CD8-positive, alpha-beta memory T cell (primary cell): ENCODE measurements at regions of chr11 and their contacts with region 1.

Region 1: DNA sequence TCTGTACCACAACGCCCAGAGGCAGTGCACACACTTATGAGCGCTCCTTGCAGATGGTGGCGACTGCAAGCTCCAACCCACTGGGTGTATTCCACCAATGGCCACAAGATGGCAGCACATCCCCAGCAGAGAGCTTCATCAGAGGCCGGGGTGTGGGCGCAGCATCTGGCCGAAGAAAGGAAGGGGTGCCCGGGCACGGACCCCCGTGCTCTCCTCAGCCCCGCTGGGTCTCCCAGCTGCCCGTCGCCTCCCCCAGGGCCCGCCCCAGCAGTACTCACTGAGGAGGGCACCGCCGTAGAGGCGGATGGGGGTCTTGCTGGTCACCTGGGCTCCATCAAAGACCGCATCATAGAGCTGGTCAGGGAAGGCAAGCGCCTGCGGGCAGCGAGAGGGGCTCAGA is 14.2 kb downstream of the TP53I11 start:
- DNase-seq: peak; percentile 67 to 85 (median 70)
- H3K4me3 ChIP-seq: no peak overlapping the region
- H3K4me3 Mint-ChIP-seq: no peak overlapping the region
- H3K27ac ChIP-seq: no peak overlapping the region
- H3K27ac Mint-ChIP-seq: peak overlapping the region in 1 of 8 donors; percentile 43
- H3K4me1 ChIP-seq: no peaks in the 10 kb centered on the region
- H3K4me1 Mint-ChIP-seq: peaks cover 6 to 17% (median 13%) of the 10 kb centered on the region in 3 donors
- H3K27me3 ChIP-seq: no peaks in the 10 kb centered on the region
- H3K27me3 Mint-ChIP-seq: no peaks in the 10 kb centered on the region

Region 2: GRCh38 chr11:44949160-44950030 is 12.9 kb after region 1 on chr11:
- CTCF ChIA-PET with region 1: interaction called, 55 read pairs
- POLR2A ChIA-PET with region 1: no interaction called
- DNase-seq: peak; percentile 12 to 57 (median 24)
- H3K4me3 ChIP-seq: peak overlapping the region; percentile 55
- H3K4me3 Mint-ChIP-seq: peak overlapping the region; percentile 84 to 94 (median 90)
- H3K27ac ChIP-seq: no peak overlapping the region
- H3K27ac Mint-ChIP-seq: peak overlapping the region; percentile 43 to 90 (median 79)
- H3K4me1 ChIP-seq: no peaks in the 10 kb centered on the region
- H3K4me1 Mint-ChIP-seq: peaks cover 13 to 39% (median 27%) of the 10 kb centered on the region in 3 donors
- H3K27me3 ChIP-seq: no peaks in the 10 kb centered on the region
- H3K27me3 Mint-ChIP-seq: peaks cover 0 to 5% of the 10 kb centered on the region in 2 donors

Region 3: DNA sequence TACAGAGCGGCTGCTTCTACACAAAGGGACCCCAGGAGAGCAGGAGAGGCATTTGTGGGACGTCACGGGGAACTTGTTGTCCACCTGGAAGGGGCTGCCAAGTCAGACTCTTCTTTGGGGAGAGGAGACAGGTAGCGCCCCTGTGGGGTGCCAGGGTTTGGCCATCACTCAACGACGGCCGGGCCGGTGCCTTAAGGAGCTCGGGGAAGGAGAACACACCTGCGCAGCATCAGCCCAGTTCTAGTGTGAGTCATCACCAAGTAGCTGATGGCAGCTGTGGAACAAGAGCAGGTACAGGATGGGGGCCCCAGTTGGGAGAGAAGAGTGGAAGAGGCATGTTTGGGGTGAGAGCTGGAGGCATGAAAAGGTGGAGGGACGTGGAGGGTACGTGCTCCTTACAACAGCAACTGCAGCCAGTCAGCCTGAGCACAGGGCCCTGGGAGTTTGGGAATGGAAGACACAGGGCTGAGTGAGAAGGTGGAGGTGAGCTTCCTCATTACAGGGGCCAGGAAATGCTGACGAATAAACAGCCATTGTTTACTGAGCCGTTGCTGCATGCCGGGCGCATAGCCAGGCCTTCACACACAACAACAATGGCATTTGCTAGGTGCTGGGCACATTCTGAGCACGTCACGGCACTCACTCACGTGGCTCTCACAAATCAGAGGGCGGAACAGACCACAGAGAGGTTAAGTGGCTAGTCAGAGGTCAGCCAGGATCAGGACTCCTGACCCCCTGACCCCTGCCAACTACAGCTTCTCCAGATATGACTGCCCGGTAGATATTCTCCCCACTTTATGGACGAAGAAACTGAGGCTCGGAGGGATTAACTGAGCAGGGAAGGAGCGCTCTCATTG is 43.2 kb after region 1 on chr11:
- CTCF ChIA-PET with region 1: interaction called, 11 read pairs
- POLR2A ChIA-PET with region 1: no interaction called
- DNase-seq: peak in 1 of 5 donors; percentile 21
- H3K4me3 ChIP-seq: no peak overlapping the region
- H3K4me3 Mint-ChIP-seq: peak overlapping the region in 4 of 7 donors; percentile 6 to 91 (median 51)
- H3K27ac ChIP-seq: no peak overlapping the region
- H3K27ac Mint-ChIP-seq: peak overlapping the region in 5 of 8 donors; percentile 59 to 87 (median 72)
- H3K4me1 ChIP-seq: peaks cover 47% of the 10 kb centered on the region
- H3K4me1 Mint-ChIP-seq: peaks cover 16 to 29% (median 28%) of the 10 kb centered on the region in 3 donors
- H3K27me3 ChIP-seq: no peaks in the 10 kb centered on the region
- H3K27me3 Mint-ChIP-seq: no peaks in the 10 kb centered on the region

Region 4: GRCh38 chr11:45079943-45080719 is 143.6 kb after region 1 on chr11:
- CTCF ChIA-PET with region 1: interaction called, 37 read pairs
- POLR2A ChIA-PET with region 1: no interaction called
- DNase-seq: peak; percentile 42 to 80 (median 64)
- H3K4me3 ChIP-seq: peak overlapping the region; percentile 41
- H3K4me3 Mint-ChIP-seq: peak overlapping the region; percentile 40 to 91 (median 73)
- H3K27ac ChIP-seq: peak overlapping the region; percentile 21
- H3K27ac Mint-ChIP-seq: peak overlapping the region; percentile 83 to 99 (median 94)
- H3K4me1 ChIP-seq: peaks cover 62% of the 10 kb centered on the region
- H3K4me1 Mint-ChIP-seq: peaks cover 63 to 74% (median 68%) of the 10 kb centered on the region in 3 donors
- H3K27me3 ChIP-seq: no peaks in the 10 kb centered on the region
- H3K27me3 Mint-ChIP-seq: no peaks in the 10 kb centered on the region

Region 5: GRCh38 chr11:45102810-45103621 is 166.5 kb after region 1 on chr11:
- CTCF ChIA-PET with region 1: interaction called, 1,027 read pairs
- POLR2A ChIA-PET with region 1: interaction called, 17 read pairs
- DNase-seq: peak; percentile 43 to 84 (median 60)
- H3K4me3 ChIP-seq: peak overlapping the region; percentile 21
- H3K4me3 Mint-ChIP-seq: peak overlapping the region; percentile 36 to 89 (median 81)
- H3K27ac ChIP-seq: no peak overlapping the region
- H3K27ac Mint-ChIP-seq: peak overlapping the region; percentile 64 to 94 (median 87)
- H3K4me1 ChIP-seq: peaks cover 18% of the 10 kb centered on the region
- H3K4me1 Mint-ChIP-seq: peaks cover 24 to 30% (median 30%) of the 10 kb centered on the region in 3 donors
- H3K27me3 ChIP-seq: no peaks in the 10 kb centered on the region
- H3K27me3 Mint-ChIP-seq: peaks cover 0 to 5% of the 10 kb centered on the region in 2 donors

Region 6: GRCh38 chr11:45332276-45332934 is 395.9 kb after region 1 on chr11:
- CTCF ChIA-PET with region 1: interaction called, 11 read pairs
- POLR2A ChIA-PET with region 1: no interaction called
- DNase-seq: peak in 3 of 5 donors; percentile 14 to 23 (median 22)
- H3K4me3 ChIP-seq: no peak overlapping the region
- H3K4me3 Mint-ChIP-seq: no peak overlapping the region
- H3K27ac ChIP-seq: no peak overlapping the region
- H3K27ac Mint-ChIP-seq: no peak overlapping the region
- H3K4me1 ChIP-seq: no peaks in the 10 kb centered on the region
- H3K4me1 Mint-ChIP-seq: peaks cover 0 to 3% (median 0%) of the 10 kb centered on the region in 3 donors
- H3K27me3 ChIP-seq: no peaks in the 10 kb centered on the region
- H3K27me3 Mint-ChIP-seq: peaks cover 21 to 35% of the 10 kb centered on the region in 2 donors